A549 (cell line): ENCODE measurements at regions of chr15 and their contacts with region 1.

Region 1: DNA sequence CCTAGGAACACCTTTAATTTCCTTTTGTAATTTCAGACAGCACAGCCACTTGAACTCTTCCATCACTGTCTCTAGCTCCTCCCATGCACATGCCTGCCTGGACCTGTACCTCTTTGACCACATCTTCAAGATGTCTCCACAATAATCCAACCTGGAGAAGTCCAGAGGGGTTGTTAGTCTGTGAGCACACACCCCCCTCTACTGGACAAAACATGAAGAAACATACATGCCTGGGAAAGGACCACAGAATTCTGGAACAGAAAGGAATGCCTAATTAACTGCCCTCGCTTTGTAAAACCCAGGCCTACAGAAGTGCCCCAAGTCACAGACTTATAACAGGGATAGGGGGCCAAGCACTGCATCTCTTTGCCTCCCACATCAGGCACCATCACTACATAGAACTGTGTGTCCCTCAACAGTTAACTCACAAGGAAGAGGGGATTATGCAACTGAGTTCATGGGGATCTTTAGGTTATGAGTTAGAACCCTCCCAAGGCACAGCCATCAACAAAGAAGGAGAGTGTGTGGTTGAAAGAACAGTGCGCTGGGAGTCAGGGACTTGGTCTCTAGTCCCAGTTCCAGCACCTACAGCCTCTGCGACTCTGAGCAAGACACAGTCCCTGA is 61.7 kb downstream of the FMN1 start:
- DNase-seq: peak; percentile 65 to 74
- ATAC-seq: peak; percentile 94 to 98
- H3K4me3 ChIP-seq: no peak overlapping the region
- H3K27ac ChIP-seq: no peak overlapping the region
- H3K4me1 ChIP-seq: no peaks in the 10 kb centered on the region; the same call in 2 of the 3 replicates
- CTCF ChIP-seq: peak; percentile 91
- EP300 ChIP-seq: no peak
- POLR2A ChIP-seq: no peak
- RAD21 ChIP-seq: peak; percentile 92 to 95

Region 2: DNA sequence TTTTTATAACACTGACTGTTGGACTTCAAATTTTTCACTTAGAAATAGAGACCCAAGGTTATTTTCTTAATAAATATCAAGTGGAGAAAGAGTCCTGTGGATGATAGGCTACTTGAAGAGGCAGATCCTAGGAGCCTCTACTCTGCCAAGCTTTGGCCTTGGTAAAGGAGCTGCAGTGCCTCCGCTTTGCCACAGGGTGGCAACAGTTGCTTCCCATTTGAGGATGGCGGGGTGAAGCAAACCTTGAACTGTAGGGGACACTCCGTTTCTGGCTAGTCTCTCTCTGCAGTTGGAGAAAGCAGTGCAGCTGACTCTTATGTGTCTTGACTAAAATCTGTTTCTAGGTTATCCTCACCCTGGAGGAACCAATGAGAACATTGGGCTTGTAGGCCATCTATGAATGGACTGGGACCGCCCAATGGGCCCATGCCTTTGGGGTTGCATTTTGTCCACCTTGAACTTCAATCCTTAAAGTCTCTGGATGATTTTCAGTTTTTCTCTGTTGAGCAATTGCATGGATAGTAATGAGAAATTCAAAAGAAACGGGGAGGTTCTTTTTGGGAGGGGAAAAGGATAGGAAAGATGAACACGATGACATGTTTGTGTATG is 481.5 kb before region 1 on chr15:
- CTCF ChIA-PET with region 1: interaction called, 48 read pairs
- POLR2A ChIA-PET with region 1: no interaction called
- DNase-seq: peak; percentile 76 to 80
- ATAC-seq: peak; percentile 92 to 96
- H3K4me3 ChIP-seq: no peak overlapping the region
- H3K27ac ChIP-seq: peak overlapping the region in 1 of 2 experiments; percentile 9; a peak in 2 of 6 replicates
- H3K4me1 ChIP-seq: peaks cover 7% of the 10 kb centered on the region; the same call in 1 of the 3 replicates
- CTCF ChIP-seq: peak; percentile 88
- EP300 ChIP-seq: no peak
- POLR2A ChIP-seq: no peak
- RAD21 ChIP-seq: peak; percentile 88 to 92

Region 3: GRCh38 chr15:33013827-33014445 is 118.9 kb before region 1 on chr15:
- CTCF ChIA-PET with region 1: interaction called, 130 read pairs
- POLR2A ChIA-PET with region 1: no interaction called
- DNase-seq: peak; percentile 75 to 81
- ATAC-seq: peak; percentile 93 to 94
- H3K4me3 ChIP-seq: no peak overlapping the region
- H3K27ac ChIP-seq: 0 out of 6 replicates have a peak overlapping the region, but pooled peaks of 1 of the 2 experiments have one; percentile 15
- H3K4me1 ChIP-seq: peaks cover 17% of the 10 kb centered on the region
- CTCF ChIP-seq: no peak
- EP300 ChIP-seq: no peak
- POLR2A ChIP-seq: no peak
- RAD21 ChIP-seq: no peak

Region 4: GRCh38 chr15:33031324-33031821 is 101.5 kb before region 1 on chr15:
- CTCF ChIA-PET with region 1: interaction called, 53 read pairs
- POLR2A ChIA-PET with region 1: no interaction called
- DNase-seq: no peak
- ATAC-seq: no peak
- H3K4me3 ChIP-seq: no peak overlapping the region
- H3K27ac ChIP-seq: no peak overlapping the region
- H3K4me1 ChIP-seq: no peaks in the 10 kb centered on the region
- CTCF ChIP-seq: no peak
- EP300 ChIP-seq: no peak
- POLR2A ChIP-seq: no peak
- RAD21 ChIP-seq: no peak

Region 5: GRCh38 chr15:33086507-33087121 is 46.2 kb before region 1 on chr15:
- CTCF ChIA-PET with region 1: interaction called, 346 read pairs
- POLR2A ChIA-PET with region 1: no interaction called
- DNase-seq: peak; percentile 40 to 71
- ATAC-seq: peak; percentile 84 to 92; a peak in 5 of 6 replicates
- H3K4me3 ChIP-seq: no peak overlapping the region
- H3K27ac ChIP-seq: no peak overlapping the region
- H3K4me1 ChIP-seq: no peaks in the 10 kb centered on the region
- CTCF ChIP-seq: peak; percentile 88
- EP300 ChIP-seq: no peak
- POLR2A ChIP-seq: no peak
- RAD21 ChIP-seq: peak; percentile 84

Region 6: DNA sequence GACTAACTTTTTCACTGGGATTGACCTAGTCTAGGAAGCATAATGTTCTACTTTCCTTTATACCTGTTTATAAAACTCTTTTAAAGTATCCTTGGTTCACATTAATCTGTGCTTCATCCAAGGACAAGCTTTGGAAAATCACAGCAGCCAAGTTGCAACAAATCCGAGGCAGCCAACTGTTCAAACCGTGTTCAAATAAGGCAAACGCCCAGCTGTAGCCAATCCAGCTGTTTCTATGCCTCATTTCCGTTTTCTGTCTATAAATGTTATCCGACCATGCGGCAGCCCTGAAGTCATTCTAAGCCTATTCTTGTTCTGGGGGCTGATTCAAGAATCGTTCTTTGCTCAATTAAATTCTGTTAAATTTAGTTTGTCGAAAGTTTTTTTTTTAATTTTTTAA is 16.6 kb before region 1 on chr15:
- CTCF ChIA-PET with region 1: interaction called, 83 read pairs
- POLR2A ChIA-PET with region 1: no interaction called
- DNase-seq: no peak
- ATAC-seq: no peak
- H3K4me3 ChIP-seq: no peak overlapping the region
- H3K27ac ChIP-seq: no peak overlapping the region
- H3K4me1 ChIP-seq: no peaks in the 10 kb centered on the region
- CTCF ChIP-seq: no peak
- EP300 ChIP-seq: no peak
- POLR2A ChIP-seq: no peak
- RAD21 ChIP-seq: no peak

Region 7: DNA sequence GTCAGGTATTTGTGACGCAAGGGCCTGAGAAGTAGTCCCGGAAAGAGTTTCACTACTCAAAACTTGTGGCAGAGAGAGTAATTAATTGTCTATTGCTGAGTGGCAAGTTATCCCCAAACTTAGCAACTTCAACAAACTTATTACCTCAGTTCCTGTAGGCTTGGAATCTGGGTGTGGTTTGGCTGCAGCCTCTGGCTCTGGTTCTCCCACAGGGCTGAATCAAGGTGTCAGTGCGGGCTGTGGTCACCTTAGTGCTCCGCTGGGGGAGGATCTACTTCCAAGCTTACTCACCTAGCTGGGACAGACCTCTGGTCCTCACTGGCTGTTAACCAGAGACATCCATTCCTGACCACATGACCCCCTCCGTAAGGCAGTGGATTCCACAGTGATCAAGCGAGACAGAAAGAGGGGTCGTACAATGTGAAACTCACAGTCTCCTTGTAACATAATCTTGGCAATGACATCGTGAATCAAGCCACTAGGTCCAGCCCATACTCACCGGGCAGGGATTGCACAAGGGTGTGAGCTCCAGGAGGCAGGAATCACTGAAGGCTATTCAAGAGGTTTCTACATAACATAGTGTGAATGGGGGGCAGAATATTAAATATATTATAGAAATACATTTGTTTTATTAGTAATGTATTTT is 316.2 kb after region 1 on chr15:
- CTCF ChIA-PET with region 1: no interaction called
- POLR2A ChIA-PET with region 1: no interaction called
- DNase-seq: no peak
- ATAC-seq: no peak
- H3K4me3 ChIP-seq: no peak overlapping the region
- H3K27ac ChIP-seq: no peak overlapping the region
- H3K4me1 ChIP-seq: no peaks in the 10 kb centered on the region
- CTCF ChIP-seq: no peak
- EP300 ChIP-seq: no peak
- POLR2A ChIP-seq: no peak
- RAD21 ChIP-seq: no peak